ENCODE measurements at regions of chr5 and their contacts with region 1.

Region 1: GRCh38 chr5:167723254-167723871 is 568.1 kb upstream of the WWC1 start:
- DNase-seq: peak in 1 of 2 donors; percentile 19
- ATAC-seq: peak; percentile 39 to 45
- H3K4me3 ChIP-seq: no peak overlapping the region
- H3K27ac ChIP-seq: no peak overlapping the region
- H3K4me1 ChIP-seq: no peaks in the 10 kb centered on the region
- H3K27me3 ChIP-seq: no peaks in the 10 kb centered on the region
- CTCF ChIP-seq: peak in 4 of 5 experiments; percentile 47 to 65 (median 58)
- POLR2A ChIP-seq: no peak

Region 2: DNA sequence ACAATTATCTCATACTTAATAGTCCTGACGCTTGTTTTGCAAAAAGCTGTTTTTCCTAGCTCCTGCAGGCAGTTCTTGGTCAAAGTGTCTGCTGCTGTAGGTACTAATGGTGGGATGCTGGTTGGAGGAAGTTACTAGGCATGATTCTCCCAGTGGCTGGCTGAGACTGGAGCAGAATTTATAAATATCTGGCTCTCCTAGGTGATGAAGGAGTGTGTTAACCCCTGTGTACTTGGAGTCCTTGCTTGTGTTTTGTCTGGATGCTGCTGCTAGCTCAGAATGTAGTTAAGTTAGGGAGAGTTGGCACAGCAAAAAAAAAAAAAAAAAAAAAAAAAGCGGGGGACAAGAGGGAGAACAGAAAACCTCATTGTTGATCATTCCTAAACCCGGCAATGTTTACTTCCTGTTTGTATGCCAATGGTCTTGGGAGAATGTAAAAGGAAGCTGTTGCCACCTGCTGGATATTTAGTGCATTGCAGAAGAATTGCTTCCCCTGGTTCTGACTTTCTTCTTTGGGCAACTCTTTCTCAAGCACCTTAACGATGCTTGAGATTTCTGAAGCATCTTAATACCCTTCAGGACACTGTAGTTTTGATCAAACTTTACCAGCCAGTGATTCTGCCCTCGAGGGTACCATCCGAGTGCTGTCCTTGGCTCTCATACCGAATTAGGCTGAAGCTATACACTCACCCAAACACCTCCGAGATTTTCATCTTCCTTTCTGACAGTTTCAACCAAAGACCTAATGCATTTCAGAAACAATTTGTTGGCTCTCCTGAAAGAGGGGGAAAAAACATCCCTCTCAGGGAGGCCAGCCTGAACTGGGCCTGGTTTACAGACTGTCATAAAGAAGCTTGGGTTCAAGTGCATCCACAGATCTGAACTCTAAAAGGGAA is 496.4 kb after region 1 on chr5:
- in situ Hi-C with region 1: loop called (anchors 5 to 25 kb)
- intact Hi-C with region 1: loop called (anchors 5 kb)
- DNase-seq: no peak
- ATAC-seq: peak; percentile 64 to 69
- H3K4me3 ChIP-seq: peak overlapping the region in 1 of 4 donors; percentile 2
- H3K27ac ChIP-seq: no peak overlapping the region
- H3K4me1 ChIP-seq: no peaks in the 10 kb centered on the region
- H3K27me3 ChIP-seq: no peaks in the 10 kb centered on the region
- CTCF ChIP-seq: peak; percentile 55 to 79 (median 66)
- POLR2A ChIP-seq: no peak

Measured in gastrocnemius medialis (tissue), 4 donors.